Cardiac septum (tissue), 1 donor: ENCODE measurements at regions of chr7 and their contacts with region 1.

Region 1: GRCh38 chr7:64618785-64619456 is 47.0 kb upstream of the ZNF107 start:
- DNase-seq: no peak

Region 2: GRCh38 chr7:64183126-64183742 is 435.7 kb before region 1 on chr7:
- intact Hi-C with region 1: loop called (anchors 2 kb)
- DNase-seq: no peak

Region 3: DNA sequence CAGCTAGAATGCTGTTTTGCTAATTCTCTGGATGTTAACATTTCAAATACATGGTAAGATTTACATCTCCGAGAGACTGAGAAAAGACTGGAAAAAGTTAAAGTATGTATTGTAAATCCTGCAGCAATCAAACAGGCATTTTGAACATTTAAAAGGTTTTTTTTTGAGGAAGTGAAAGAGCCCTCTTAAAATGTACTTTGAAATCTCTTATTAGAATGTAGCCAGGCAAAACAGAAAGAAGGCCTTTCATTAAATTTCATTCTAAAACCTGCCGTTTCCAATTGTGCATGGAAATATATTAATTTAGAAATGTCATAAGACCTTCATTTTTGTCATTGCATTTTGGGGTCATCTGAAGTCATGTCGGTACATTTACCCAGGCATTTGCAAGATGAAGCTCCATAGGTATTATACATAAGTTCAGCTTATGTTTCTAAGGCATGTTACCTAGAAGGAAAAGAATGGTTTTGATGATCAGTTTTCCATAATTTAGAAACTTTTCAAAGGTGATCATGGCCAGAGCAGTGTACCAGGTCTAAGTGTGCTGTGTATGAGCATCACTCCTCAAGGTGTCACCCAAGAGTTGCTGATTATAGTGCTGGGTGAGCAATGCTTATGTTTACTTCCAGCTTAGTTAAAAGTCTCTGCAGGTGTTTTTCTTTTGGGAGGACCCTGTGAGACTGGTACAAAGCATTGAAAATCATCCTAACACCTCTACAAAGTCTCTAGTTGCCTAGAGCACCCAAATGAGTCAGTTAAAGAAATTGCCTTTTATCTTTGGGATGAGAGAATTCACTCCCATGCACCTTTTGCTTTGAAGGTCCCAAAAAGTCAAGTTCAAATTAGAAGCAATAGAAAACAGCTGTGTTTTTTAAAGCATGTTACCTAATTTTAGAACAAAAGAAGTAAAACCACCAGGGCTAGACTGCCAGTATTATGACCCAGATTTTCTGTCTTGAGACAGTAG is 298.1 kb before region 1 on chr7:
- intact Hi-C with region 1: loop called (anchors 5 kb)
- DNase-seq: no peak

Region 4: GRCh38 chr7:64959072-64959747 is 340.3 kb after region 1 on chr7:
- intact Hi-C with region 1: no loop called
- DNase-seq: no peak